ENCODE measurements at regions of chr4 and their contacts with region 1.

Region 1: DNA sequence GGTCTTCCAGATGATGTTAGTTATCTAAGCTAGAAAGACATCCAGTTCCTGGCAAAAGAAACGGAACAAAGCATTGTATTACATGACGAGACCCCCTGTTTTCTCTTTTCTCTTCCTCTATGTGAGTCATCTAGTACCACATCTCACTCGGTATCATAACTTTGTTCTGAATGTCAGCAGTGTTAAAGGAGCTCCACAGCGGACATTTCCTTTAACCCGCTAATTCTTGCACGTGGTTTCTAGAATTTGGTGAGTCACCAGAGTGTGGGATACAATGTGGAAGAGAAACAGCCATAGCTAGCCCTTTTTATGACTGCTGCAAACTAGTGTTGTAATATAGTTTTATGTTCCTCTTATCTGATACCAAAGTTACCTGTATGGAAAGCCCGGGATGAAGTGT is 243.7 kb downstream of the TENM3 start:
- DNase-seq: no peak
- H3K4me3 ChIP-seq: no peak overlapping the region
- H3K27ac ChIP-seq: no peak overlapping the region
- H3K4me1 ChIP-seq: no peaks in the 10 kb centered on the region
- H3K27me3 ChIP-seq: no peaks in the 10 kb centered on the region
- CTCF ChIP-seq: no peak

Region 2: DNA sequence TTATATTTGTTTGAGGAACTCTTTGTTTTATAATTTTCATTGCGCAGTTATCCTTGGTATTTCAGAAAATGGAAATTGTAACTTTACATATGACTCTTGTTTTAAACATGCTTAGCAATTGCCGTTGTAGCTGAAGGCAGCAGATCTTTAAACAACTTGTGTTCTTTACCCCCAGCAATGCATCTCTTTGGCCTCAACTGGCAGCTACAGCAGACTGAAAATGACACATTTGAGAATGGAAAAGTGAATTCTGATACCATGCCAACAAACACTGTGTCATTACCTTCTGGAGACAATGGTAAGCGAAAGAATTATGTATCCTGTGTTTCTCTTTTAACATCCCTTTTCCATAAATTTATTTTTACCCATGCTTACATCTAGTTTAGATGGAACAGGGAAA is 166.7 kb after region 1 on chr4:
- intact Hi-C with region 1: no loop called
- DNase-seq: no peak
- H3K4me3 ChIP-seq: no peak overlapping the region
- H3K27ac ChIP-seq: no peak overlapping the region
- H3K4me1 ChIP-seq: peaks cover 0 to 12% (median 9%) of the 10 kb centered on the region in 4 donors
- H3K27me3 ChIP-seq: no peaks in the 10 kb centered on the region
- CTCF ChIP-seq: no peak

Region 3: GRCh38 chr4:182806259-182807252 is 319.7 kb after region 1 on chr4:
- intact Hi-C with region 1: loop called (anchors 10 kb)
- DNase-seq: peak; percentile 55 to 81
- H3K4me3 ChIP-seq: peak overlapping the region; percentile 53 to 59
- H3K27ac ChIP-seq: peak overlapping the region; percentile 12 to 37
- H3K4me1 ChIP-seq: peaks cover 0 to 14% (median 3%) of the 10 kb centered on the region in 4 donors
- H3K27me3 ChIP-seq: peaks cover 0 to 7% of the 10 kb centered on the region in 2 donors
- CTCF ChIP-seq: peak; percentile 82 to 91

Measured in tibial artery (tissue), 4 donors.